Posterior vena cava (tissue), 2 donors: ENCODE measurements at regions of chr1 and their contacts with region 1.

Region 1: DNA sequence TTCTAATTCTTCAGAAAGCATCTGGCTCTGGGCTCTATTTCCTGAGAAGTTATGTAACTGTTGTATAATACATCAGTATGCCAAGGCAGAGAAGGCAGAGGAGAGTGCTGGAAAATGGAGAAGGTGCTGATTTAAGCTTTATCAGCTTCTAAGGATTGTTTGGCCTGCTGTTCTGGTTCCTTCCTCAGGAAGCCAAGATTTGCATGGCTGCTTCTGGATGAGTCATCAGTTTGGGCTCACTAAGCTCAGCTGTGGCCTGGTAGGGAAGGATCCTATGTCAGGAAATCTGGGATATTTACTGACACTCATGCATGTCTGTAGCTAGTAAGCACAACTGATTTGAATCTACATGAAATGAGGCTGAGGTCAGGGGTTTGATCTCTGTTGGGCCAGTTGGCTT is 73.2 kb upstream of the ADGRL4 start:
- DNase-seq: no peak

Region 2: DNA sequence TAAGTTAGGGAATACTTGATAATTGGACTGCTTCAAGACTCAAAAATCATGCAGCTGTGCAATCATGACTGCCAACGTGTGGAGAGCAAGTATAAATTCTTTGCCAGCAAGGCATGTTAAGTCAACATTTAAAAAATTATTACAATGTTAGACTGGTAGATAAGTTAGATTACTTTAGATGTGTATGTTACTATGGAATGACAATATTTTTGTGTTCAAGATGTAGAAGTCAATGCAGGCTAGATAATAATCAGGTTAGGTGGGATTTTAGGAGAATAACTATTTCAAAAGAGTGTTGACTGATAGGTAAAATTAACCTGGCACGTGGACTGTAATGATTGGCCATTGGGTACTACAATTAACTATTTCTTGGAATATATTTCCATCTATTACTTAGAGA is 30.1 kb before region 1 on chr1:
- intact Hi-C with region 1: loop called in 1 of 2 experiments (anchors 2 kb)
- DNase-seq: no peak

Region 3: DNA sequence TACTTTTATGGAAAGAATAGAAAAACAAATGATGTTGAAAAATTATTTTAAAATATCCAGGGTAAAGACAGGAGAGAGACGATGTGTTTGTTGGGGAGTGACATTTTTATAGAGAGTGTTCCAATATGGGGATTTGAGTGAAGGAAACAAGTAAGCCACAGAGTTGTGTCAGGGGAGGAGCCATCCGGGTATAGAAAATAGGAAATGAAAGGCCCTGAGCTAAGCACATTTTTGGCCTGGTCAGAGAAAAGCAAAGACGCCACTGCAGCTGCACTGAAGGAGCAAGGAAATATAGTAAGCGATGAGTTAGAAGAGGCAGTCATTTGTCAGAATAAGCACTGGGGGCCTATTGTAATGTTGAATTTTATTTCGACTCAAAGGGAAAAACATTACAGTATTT is 34.1 kb after region 1 on chr1:
- intact Hi-C with region 1: no loop called
- DNase-seq: no peak